Heart left ventricle (tissue), 16 donors: ENCODE measurements at regions of chr7 and their contacts with region 1.

Region 1: GRCh38 chr7:104923010-104923421 is 91.0 kb upstream of the KMT2E start:
- DNase-seq: peak; percentile 74 to 81 (median 75)
- ATAC-seq: peak; percentile 82 to 94 (median 90)
- H3K4me3 ChIP-seq: no peak overlapping the region
- H3K27ac ChIP-seq: peak overlapping the region in 9 of 12 donors; percentile 21 to 78 (median 58)
- H3K4me1 ChIP-seq: peaks cover 0 to 21% (median 9%) of the 10 kb centered on the region in 12 donors
- H3K27me3 ChIP-seq: no peaks in the 10 kb centered on the region
- CTCF ChIP-seq: peak; percentile 47 to 83 (median 74)
- POLR2A ChIP-seq: no peak

Region 2: DNA sequence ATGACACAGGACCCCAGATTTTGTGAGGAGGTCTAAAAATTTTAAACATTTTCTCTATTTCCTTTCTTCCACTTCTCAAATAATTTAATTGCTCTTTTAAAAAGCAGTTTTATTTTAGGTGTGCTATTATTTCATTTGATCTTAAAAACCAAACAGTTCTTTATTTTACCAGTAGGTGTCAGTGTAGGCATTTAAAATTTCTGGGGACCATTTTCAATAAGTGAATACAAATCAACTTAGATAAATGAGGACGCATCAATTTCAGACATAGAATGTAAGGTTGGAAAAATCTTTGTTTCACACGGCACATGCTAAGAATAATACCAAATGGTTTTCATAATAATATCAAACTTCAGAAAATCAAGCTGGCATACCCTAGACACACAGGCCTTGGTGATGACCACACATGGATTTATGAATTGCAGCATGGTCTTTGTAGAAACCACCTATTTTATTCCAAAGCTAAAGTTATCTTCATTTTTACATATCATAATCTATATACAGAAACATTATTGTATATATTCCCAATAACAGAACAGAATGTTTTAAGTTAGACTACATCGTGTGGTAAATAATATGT is 1349.4 kb before region 1 on chr7:
- intact Hi-C with region 1: loop called in 2 of 10 experiments (anchors 5 kb)
- DNase-seq: no peak
- ATAC-seq: no peak
- H3K4me3 ChIP-seq: no peak overlapping the region
- H3K27ac ChIP-seq: no peak overlapping the region
- H3K4me1 ChIP-seq: peaks cover 0 to 7% (median 0%) of the 10 kb centered on the region in 12 donors
- H3K27me3 ChIP-seq: peaks cover 0 to 5% (median 0%) of the 10 kb centered on the region in 9 donors
- CTCF ChIP-seq: peak; percentile 53 to 73 (median 62)
- POLR2A ChIP-seq: no peak

Region 3: DNA sequence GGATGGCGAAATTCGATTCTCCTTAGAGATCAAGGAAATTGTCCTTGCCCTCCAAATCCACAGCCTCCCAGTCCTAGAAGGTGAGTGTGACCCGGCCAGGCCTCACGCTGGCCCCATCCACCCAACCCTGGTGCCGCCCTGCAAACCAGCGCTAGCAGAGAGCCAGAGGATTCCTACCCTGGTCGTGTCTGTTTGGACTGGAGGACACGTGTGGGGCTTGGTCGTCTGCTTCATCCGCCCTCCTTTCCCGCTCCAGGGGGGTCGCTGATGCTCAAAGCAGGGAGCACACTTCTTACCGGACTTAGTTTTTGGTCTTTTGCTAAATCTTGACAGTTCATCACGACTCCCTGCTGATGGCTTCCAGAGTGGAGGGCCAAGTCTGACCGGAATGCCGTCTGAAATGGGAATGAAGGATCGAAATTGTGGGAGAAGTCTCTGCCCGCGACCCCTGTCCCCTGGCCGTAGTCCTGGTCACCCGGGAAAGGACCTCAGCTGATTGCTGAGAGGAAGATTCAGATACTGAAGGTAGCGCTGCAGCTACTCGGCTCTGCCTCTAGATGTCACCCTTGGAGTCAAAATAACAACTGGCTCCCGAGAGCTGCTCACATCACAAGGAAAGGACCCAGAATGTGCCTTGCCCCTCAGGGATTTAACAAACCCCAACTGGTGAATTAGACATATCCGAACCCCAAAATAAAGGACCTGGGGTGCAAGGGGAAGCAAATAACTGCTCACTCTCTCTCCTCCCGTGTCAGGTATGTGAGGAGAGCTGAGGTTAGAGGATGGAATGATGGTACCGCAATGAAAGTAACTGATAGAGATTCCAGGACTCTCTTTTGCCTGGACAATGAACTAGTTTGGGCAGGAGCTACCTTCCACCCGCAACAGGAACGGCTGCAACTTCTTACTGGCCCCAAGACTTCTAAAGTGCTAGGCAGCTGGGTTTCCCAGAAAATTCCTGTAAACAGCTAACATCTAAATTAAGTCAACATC is 691.7 kb before region 1 on chr7:
- intact Hi-C with region 1: loop called in 8 of 10 experiments (anchors 5 kb)
- DNase-seq: peak in 3 of 5 donors; percentile 20 to 48 (median 32)
- ATAC-seq: peak; percentile 26 to 86 (median 68)
- H3K4me3 ChIP-seq: no peak overlapping the region
- H3K27ac ChIP-seq: no peak overlapping the region
- H3K4me1 ChIP-seq: peaks cover 0 to 7% (median 0%) of the 10 kb centered on the region in 12 donors
- H3K27me3 ChIP-seq: peaks cover 0 to 14% (median 4%) of the 10 kb centered on the region in 9 donors
- CTCF ChIP-seq: peak; percentile 65 to 85 (median 74)
- POLR2A ChIP-seq: no peak

Region 4: DNA sequence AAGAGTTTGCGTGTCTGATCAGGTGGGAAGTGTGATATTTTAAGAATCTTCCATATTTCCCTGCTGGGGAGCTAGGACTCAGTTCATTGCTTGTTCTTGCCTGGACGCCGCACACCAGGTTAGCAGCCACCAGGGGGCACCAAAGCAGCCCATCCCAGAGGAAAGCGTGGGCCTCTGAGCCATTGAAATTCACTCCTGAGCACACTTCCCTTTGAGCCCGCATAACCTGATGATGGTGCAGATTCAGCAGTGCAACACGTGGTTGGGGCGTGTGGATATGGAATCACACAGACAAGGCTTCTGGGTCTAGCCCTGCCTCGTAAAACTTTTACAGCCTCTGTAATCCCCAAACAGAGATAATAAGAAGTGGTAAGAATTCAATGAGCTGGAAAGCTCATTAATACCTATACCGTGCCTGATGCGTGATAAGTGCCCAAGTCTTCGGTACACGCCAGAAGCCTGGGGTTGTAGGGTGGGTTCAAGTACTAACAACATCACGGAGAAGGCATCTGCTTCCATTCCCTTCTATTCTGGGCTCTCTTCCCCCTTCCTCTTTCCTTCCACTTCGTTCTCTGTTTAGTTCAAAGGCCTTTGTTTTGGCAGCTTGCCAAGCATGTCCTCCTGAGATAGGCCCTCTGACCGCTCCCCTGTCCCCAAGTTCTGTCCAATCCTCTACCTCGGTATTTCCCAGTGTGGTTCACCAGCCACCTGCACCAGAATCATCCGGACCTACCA is 39.1 kb before region 1 on chr7:
- intact Hi-C with region 1: loop called in 7 of 10 experiments (anchors 1 to 5 kb)
- DNase-seq: peak; percentile 85 to 93 (median 89)
- ATAC-seq: peak; percentile 94 to 97 (median 96)
- H3K4me3 ChIP-seq: peak overlapping the region in 6 of 12 donors; percentile 2 to 33 (median 23)
- H3K27ac ChIP-seq: peak overlapping the region; percentile 71 to 90 (median 84)
- H3K4me1 ChIP-seq: peaks cover 0 to 19% (median 13%) of the 10 kb centered on the region in 12 donors
- H3K27me3 ChIP-seq: no peaks in the 10 kb centered on the region
- CTCF ChIP-seq: peak; percentile 90 to 96 (median 94)
- POLR2A ChIP-seq: no peak

Region 5: DNA sequence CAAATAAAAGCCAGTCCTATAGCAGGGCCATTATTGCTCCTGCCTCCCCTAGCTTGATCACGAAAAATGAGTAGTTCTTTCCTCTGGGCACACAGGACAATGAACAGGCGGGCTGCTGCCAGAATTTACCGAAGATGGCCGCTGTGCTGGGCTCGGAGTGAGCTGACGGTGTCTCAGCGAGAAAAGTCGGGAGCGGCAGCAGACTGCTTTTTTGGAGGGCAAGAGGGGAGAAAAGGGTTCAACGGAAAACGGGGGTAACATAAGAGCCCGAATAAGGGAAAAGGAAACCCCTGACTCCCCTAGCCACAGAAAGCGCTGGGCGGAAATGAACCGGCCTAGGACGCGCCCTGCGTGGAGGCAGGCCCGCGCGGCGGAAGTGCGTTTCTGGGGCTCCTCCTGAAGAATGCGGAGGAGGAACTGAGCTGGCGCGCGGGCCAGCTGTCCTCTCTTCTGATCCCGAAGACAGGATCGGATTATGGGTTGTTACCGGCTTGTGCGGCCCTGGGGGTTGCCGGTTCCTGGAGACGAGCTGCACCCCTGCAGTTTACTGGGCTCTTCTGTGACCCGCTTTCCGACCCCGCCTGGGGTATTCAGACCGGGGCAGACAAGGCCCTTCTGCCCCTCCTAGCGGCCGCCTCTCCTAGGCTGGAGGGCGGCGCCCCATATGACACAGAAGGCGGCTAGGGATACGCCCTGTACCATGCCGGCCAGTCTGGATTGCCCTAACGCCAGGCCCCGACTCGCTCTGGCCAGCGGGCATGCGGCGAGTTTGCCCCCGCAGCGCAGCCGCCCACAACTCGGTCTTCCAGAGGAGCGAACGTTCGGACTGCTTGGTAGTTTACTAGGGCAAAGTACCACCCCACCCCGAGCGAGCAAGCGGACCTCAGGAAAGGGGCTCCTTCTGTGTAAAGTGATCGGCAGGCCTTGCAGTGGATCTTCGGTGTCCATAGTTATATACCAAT is 60.8 kb after region 1 on chr7:
- intact Hi-C with region 1: loop called in 4 of 10 experiments (anchors 2 to 10 kb)
- DNase-seq: peak; percentile 92 to 94 (median 93)
- ATAC-seq: peak; percentile 93 to 97 (median 95)
- H3K4me3 ChIP-seq: peak overlapping the region; percentile 55 to 73 (median 68)
- H3K27ac ChIP-seq: peak overlapping the region; percentile 90 to 99 (median 98)
- H3K4me1 ChIP-seq: peaks cover 0 to 88% (median 63%) of the 10 kb centered on the region in 12 donors
- H3K27me3 ChIP-seq: no peaks in the 10 kb centered on the region
- CTCF ChIP-seq: peak; percentile 28 to 84 (median 58)
- POLR2A ChIP-seq: peak in 1 of 2 donors; percentile 84

Region 6: GRCh38 chr7:105336009-105336408 is 413.0 kb after region 1 on chr7:
- intact Hi-C with region 1: loop called in 2 of 10 experiments (anchors 5 to 10 kb)
- DNase-seq: no peak
- ATAC-seq: no peak
- H3K4me3 ChIP-seq: no peak overlapping the region
- H3K27ac ChIP-seq: no peak overlapping the region
- H3K4me1 ChIP-seq: peaks cover 0 to 14% (median 5%) of the 10 kb centered on the region in 12 donors
- H3K27me3 ChIP-seq: no peaks in the 10 kb centered on the region
- CTCF ChIP-seq: peak; percentile 12 to 60 (median 47)
- POLR2A ChIP-seq: no peak